Vagina (tissue), 2 donors: ENCODE measurements at regions of chr17 and their contacts with region 1.

Region 1: GRCh38 chr17:67824735-67825626 is at the start of gene BPTF:
- DNase-seq: peak in 1 of 2 donors; percentile 92
- H3K4me3 ChIP-seq: peak within 1 kb of the TSS; percentile 62 to 77
- H3K27ac ChIP-seq: peak within 1 kb of the TSS; percentile 97
- H3K4me1 ChIP-seq: peaks cover 42% of the 10 kb centered on the region
- H3K27me3 ChIP-seq: no peaks in the 10 kb centered on the region
- CTCF ChIP-seq: peak; percentile 78 to 91 (median 86)
- POLR2A ChIP-seq: peak in 1 of 2 donors; percentile 49
- total RNA-seq, gene BPTF: 146 TPM

Region 2: GRCh38 chr17:67366193-67367157 is 458.5 kb before region 1 on chr17 and contains the start of gene PSMD12:
- intact Hi-C with region 1: loop called (anchors 5 kb)
- DNase-seq: peak in 1 of 2 donors; percentile 93
- H3K4me3 ChIP-seq: peak within 1 kb of the TSS; percentile 76 to 87
- H3K27ac ChIP-seq: peak within 1 kb of the TSS; percentile 85
- H3K4me1 ChIP-seq: peaks cover 46% of the 10 kb centered on the region
- H3K27me3 ChIP-seq: no peaks in the 10 kb centered on the region
- CTCF ChIP-seq: peak in 1 of 3 experiments; percentile 8
- POLR2A ChIP-seq: peak in 1 of 2 donors; percentile 60
- total RNA-seq, gene PSMD12: 26.0 TPM